Testis (tissue), 5 donors: ENCODE measurements at regions of chr1 and their contacts with region 1.

Region 1: GRCh38 chr1:150076066-150076465 is 8.5 kb downstream of the VPS45 start:
- DNase-seq: no peak
- H3K4me3 ChIP-seq: no peak overlapping the region
- H3K27ac ChIP-seq: no peak overlapping the region
- H3K4me1 ChIP-seq: no peaks in the 10 kb centered on the region
- H3K27me3 ChIP-seq: no peaks in the 10 kb centered on the region
- CTCF ChIP-seq: no peak
- POLR2A ChIP-seq: no peak

Region 2: GRCh38 chr1:149962123-149962548 is 113.9 kb before region 1 on chr1:
- intact Hi-C with region 1: no loop called
- DNase-seq: peak; percentile 70
- H3K4me3 ChIP-seq: no peak overlapping the region
- H3K27ac ChIP-seq: peak overlapping the region in 1 of 2 donors; percentile 53
- H3K4me1 ChIP-seq: peaks cover 12% of the 10 kb centered on the region
- H3K27me3 ChIP-seq: no peaks in the 10 kb centered on the region
- CTCF ChIP-seq: peak; percentile 69 to 79 (median 70)
- POLR2A ChIP-seq: no peak

Region 3: GRCh38 chr1:150118716-150119115 is 42.6 kb after region 1 on chr1:
- intact Hi-C with region 1: no loop called
- DNase-seq: no peak
- H3K4me3 ChIP-seq: no peak overlapping the region
- H3K27ac ChIP-seq: no peak overlapping the region
- H3K4me1 ChIP-seq: no peaks in the 10 kb centered on the region
- H3K27me3 ChIP-seq: no peaks in the 10 kb centered on the region
- CTCF ChIP-seq: no peak
- POLR2A ChIP-seq: no peak

Region 4: DNA sequence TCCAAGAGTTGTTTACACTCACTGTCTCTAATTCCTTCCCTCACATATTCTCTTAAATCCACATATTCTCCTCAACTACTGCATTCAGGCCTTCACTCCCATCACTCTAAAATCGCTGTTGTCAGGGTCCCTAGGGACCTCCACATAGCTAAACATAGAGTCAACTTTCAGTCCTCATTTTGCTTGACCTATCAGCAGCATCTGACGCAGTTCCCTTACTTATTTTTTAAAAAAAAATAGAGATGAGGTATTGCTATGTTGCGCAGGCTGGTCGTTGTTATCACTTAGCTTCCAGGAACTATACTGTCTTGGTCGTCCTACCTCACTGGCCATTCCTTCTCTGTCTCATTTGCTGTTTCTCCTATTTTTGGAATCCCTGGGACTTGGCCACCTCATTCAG is 62.0 kb after region 1 on chr1:
- intact Hi-C with region 1: no loop called
- DNase-seq: no peak
- H3K4me3 ChIP-seq: no peak overlapping the region
- H3K27ac ChIP-seq: no peak overlapping the region
- H3K4me1 ChIP-seq: no peaks in the 10 kb centered on the region
- H3K27me3 ChIP-seq: no peaks in the 10 kb centered on the region
- CTCF ChIP-seq: no peak
- POLR2A ChIP-seq: no peak

Region 5: GRCh38 chr1:150168960-150169601 is 93.0 kb after region 1 on chr1:
- intact Hi-C with region 1: loop called (anchors 5 kb)
- DNase-seq: peak; percentile 77
- H3K4me3 ChIP-seq: no peak overlapping the region
- H3K27ac ChIP-seq: no peak overlapping the region
- H3K4me1 ChIP-seq: no peaks in the 10 kb centered on the region
- H3K27me3 ChIP-seq: no peaks in the 10 kb centered on the region
- CTCF ChIP-seq: peak; percentile 60 to 72 (median 71)
- POLR2A ChIP-seq: no peak